Adrenal gland (tissue), 19 donors: ENCODE measurements at regions of chr1 and their contacts with region 1.

Region 1: DNA sequence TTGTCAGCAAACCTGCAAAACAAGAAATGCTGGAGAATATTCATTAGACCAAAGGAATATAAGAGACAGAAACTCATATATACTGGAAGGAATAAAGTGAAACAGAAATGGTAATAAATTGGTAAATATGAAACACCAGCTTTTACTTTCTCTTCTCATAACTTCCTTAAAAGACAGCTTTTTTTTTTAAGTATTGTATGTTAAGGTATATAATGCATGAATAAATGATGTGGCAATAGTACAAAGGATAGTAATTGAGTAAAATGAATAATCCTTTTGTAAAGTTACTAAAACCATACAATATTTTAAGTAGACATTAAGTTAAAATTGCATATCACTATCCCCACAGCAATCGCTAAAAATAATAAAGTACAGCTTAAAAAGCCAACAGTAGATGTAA is 64.8 kb downstream of the TRIM33 start:
- DNase-seq: no peak
- H3K4me3 ChIP-seq: no peak overlapping the region
- H3K27ac ChIP-seq: no peak overlapping the region
- H3K4me1 ChIP-seq: no peaks in the 10 kb centered on the region
- H3K27me3 ChIP-seq: no peaks in the 10 kb centered on the region
- CTCF ChIP-seq: no peak
- POLR2A ChIP-seq: no peak

Region 2: GRCh38 chr1:114397601-114398000 is 48.6 kb before region 1 on chr1:
- intact Hi-C with region 1: no loop called
- DNase-seq: no peak
- H3K4me3 ChIP-seq: no peak overlapping the region
- H3K27ac ChIP-seq: no peak overlapping the region
- H3K4me1 ChIP-seq: no peaks in the 10 kb centered on the region
- H3K27me3 ChIP-seq: no peaks in the 10 kb centered on the region
- CTCF ChIP-seq: no peak
- POLR2A ChIP-seq: no peak

Region 3: DNA sequence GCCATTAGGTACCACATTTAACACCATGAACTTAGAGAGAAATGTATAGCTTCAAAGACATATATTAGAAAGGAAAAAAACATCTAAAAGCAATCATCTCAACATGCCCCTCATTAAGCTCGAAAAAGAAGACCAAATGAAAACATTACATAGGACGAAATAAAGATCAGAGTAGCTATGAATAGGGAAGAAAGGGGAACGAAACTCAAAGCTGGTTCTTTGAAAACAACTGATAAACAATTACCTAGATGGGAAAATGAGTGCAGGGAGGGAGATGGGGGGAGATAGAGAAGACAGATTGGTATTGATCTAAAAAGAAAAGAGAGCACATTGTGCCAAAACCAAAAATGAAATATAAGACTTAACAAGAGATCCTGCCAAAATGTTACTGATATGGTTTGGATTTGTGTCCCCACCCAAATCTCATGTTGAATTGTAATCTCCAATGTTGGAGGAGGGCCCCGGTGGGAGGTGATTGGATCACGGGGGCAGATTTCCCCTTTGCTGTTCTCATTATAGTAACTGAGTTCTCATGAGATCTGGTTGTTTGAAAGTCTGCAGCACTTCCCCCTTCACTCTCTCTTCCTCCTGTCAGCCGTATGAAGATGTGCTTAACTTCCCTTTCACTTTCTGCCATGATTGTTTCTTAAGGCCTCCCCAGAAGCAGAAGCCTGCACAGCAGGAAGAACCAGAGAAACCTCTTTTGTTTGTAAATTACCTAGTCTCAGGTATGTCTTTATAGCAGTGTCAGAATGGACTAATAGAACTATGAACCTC is 36.2 kb after region 1 on chr1:
- intact Hi-C with region 1: no loop called
- DNase-seq: no peak
- H3K4me3 ChIP-seq: no peak overlapping the region
- H3K27ac ChIP-seq: no peak overlapping the region
- H3K4me1 ChIP-seq: no peaks in the 10 kb centered on the region
- H3K27me3 ChIP-seq: no peaks in the 10 kb centered on the region
- CTCF ChIP-seq: no peak
- POLR2A ChIP-seq: no peak

Region 4: GRCh38 chr1:114511032-114511785 is 65.0 kb after region 1 on chr1 and contains the start of gene TRIM33:
- intact Hi-C with region 1: loop called in 1 of 2 experiments (anchors 10 kb)
- DNase-seq: peak; percentile 87 to 94 (median 89)
- H3K4me3 ChIP-seq: peak within 1 kb of the TSS; percentile 72 to 99 (median 90)
- H3K27ac ChIP-seq: peak within 1 kb of the TSS; percentile 89 to 99 (median 97)
- H3K4me1 ChIP-seq: peaks cover 6 to 35% of the 10 kb centered on the region in 2 donors
- H3K27me3 ChIP-seq: no peaks in the 10 kb centered on the region
- CTCF ChIP-seq: no peak
- POLR2A ChIP-seq: peak; percentile 42 to 79
- total RNA-seq, gene TRIM33: 18.2 to 49.0 (median 27.1) TPM